AG04449 (cell line): ENCODE measurements at regions of chr1 and their contacts with region 1.

Region 1: DNA sequence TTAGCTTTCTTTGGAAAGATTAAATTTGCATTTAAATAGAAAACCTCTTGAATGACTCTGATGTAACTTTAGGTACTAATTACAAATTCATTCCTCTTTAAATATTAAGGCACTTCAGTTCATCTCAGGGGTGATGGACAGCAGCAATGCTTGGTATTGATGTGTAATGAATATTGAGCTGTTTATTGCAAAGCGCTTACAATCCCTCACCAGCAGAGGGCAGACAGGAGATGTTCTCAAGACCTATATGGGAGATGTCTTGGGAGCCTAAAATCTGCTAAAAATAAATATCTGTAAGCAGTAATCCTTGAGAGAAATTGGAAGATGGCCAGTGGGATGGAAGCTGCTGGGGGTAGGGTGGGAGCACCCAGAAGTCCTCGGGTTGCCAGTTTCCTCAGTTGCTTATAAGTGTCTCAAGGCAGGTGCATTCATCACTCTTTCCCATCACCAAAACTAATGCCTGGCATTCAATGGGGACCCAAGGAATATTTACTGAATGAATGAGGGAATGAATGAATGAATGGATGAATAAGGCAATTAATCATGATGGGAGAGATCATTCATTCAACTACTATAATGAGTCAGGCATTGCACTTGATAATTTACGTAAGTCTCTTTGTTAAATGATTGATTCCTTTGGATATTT is 2.3 kb downstream of the KLHDC8A start:
- DNase-seq: no peak
- H3K4me3 ChIP-seq: no peak overlapping the region
- CTCF ChIP-seq: peak; percentile 73

Region 2: GRCh38 chr1:205335643-205336091 is 18.7 kb before region 1 on chr1:
- CTCF ChIA-PET with region 1: interaction called, 58 read pairs
- POLR2A ChIA-PET with region 1: interaction called, 3 read pairs
- DNase-seq: no peak
- H3K4me3 ChIP-seq: no peak overlapping the region
- CTCF ChIP-seq: peak; percentile 99

Region 3: GRCh38 chr1:205375835-205376545 is 21.6 kb after region 1 on chr1:
- CTCF ChIA-PET with region 1: interaction called, 58 read pairs
- POLR2A ChIA-PET with region 1: no interaction called
- DNase-seq: no peak
- H3K4me3 ChIP-seq: no peak overlapping the region
- CTCF ChIP-seq: peak; percentile 9

Region 4: DNA sequence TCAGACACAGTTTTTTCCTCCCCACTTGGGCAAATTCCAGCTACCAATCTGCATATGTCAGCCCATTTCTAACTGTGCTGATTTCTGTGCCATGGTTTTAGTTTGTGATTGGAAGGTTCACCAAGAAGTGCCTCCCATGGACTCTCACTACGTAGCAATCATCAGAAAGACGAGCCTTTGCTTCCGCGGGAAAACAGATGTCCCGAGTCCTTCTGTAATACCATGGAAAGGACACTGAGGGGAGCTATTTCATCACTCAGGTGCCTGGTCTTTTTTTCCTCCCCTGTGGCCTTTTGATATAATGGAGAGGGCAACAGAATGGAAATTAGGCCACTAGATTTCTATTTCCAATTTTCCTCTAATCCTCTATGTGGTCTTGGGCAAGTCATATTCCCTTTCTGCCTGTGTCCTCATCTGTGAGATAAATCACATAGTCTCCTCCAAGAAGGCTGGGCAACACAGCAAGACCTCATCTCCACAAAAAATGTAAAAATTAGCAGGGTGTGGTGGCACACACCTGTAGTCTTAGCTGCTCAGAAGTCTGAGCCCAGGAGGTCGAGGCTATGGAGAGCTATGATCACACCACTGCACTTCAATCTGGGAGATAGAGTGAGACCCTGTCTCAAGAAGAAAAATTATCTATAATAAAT is 42.7 kb after region 1 on chr1:
- CTCF ChIA-PET with region 1: interaction called, 17 read pairs
- POLR2A ChIA-PET with region 1: no interaction called
- DNase-seq: no peak
- H3K4me3 ChIP-seq: no peak overlapping the region
- CTCF ChIP-seq: peak; percentile 35

Region 5: GRCh38 chr1:205458777-205459566 is 104.6 kb after region 1 on chr1:
- CTCF ChIA-PET with region 1: interaction called, 10 read pairs
- POLR2A ChIA-PET with region 1: no interaction called
- DNase-seq: no peak
- H3K4me3 ChIP-seq: no peak overlapping the region
- CTCF ChIP-seq: no peak

Region 6: DNA sequence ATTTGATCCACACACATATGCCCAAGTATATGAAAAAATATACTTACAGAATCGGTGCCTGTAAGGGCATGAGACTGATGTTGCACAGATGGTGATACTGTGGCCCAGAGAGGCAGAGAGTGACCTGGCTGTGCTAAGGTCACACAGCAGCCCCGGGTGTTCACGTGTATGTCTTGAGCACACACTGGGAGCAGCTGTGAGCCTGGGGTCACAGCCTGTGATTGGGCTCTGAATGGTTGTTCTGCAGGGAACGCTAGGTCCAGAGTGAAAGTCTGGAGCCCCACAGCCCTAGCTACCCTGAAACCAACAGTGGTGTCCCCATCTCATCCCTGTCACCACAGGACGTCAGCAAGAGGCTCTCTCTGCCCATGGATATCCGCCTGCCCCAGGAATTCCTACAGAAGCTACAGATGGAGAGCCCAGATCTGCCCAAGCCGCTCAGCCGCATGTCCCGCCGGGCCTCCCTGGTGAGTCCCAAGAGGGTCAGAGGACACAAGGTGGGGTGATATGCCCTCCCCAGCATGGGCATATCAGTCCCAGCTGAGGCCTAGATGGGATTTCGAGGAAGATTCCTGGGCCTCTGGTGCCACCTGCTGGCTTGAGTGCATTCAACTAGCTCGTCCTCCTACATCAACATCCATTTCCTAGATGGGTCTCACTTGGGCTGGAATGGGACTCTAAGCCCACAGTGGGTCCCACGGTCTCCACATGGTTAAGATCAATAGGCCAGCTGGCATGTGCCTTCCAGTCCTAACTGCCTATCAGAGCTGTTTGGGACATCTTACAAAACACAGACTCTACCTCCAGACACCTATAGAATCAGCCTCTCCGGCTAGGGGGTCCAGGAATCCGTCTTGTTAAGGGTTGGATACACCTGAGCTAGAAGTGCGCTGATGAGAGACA is 169.8 kb after region 1 on chr1:
- CTCF ChIA-PET with region 1: interaction called, 160 read pairs
- POLR2A ChIA-PET with region 1: no interaction called
- DNase-seq: no peak
- H3K4me3 ChIP-seq: no peak overlapping the region
- CTCF ChIP-seq: peak; percentile 82

Region 7: DNA sequence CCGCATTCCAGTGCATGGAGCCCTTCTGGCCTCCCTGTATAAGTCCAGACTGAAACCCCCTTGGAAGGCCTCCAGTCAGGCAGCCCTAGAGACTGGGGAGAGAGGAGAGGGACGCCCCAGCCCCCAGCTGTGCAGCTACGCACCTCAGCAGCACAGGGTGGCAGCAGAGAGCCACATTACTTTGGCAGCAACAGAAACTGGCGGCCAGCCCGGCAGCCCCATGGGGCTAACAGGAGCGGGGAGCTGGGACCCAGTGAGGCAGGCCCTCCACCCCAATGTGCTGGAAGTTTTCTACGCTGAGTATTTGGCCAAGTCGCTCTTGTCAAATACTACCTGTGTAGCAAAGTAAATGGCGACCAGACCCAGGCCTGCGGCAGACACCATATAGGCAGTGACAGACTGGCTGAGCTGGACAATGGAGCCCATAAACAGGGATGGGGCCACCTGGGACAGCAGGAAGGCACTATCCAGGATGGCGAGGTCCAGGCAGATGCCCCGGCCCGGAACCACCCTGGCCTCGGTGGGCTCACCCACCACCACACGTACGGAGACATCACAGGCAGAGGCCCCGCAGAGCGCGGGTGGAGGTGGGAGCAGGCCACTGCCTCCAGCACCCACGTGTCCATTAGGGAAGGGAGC is 304.7 kb after region 1 on chr1:
- CTCF ChIA-PET with region 1: no interaction called
- POLR2A ChIA-PET with region 1: no interaction called
- DNase-seq: no peak
- H3K4me3 ChIP-seq: no peak overlapping the region
- CTCF ChIP-seq: peak; percentile 93